Endothelial cell of umbilical vein (primary cell): ENCODE measurements at regions of chr1 and their contacts with region 1.

Region 1: DNA sequence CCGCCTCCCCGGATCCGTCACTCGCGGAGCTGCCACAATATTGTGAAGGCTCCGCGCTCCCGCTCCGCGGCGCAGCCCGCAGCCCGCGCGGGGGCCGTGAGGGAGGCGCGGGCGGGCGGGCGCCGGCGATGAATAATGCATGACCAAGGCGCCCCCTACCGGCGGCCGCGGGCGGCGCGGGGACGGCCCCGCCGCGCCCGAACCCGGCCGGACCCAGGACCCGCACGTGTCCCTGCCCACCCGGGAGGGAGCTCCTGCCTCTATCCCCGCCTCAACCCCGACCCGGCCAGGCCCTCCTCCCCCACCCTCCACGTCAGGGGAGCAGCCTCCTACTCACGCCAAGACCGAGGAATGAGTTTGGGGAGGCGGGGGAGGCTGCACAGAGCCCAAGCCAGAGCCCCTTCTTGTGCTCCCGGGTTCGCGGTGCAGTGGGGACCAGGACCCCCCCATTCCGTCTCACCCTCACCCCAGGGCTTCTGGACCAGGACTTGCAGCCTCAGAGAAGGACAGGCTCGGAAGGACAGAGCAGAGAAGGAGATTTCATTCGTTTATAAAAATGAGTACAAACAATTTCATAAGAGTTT is 70.8 kb upstream of the CASZ1 start:
- DNase-seq: peak; percentile 22
- H3K4me3 ChIP-seq: peak overlapping the region in 1 of 3 experiments; percentile 22
- H3K27ac ChIP-seq: no peak overlapping the region
- H3K4me1 ChIP-seq: no peaks in the 10 kb centered on the region
- H3K27me3 ChIP-seq: peaks cover 9 to 11% of the 10 kb centered on the region in 2 experiments
- CTCF ChIP-seq: peak; percentile 48 to 77
- POLR2A ChIP-seq: no peak

Region 2: GRCh38 chr1:9996624-9997582 is 870.3 kb before region 1 on chr1 and contains the start of gene RBP7:
- CTCF ChIA-PET with region 1: no interaction called
- POLR2A ChIA-PET with region 1: no interaction called
- dilution Hi-C with region 1: no loop called
- intact Hi-C with region 1: no loop called
- DNase-seq: no peak
- H3K4me3 ChIP-seq: no peak within 1 kb of the TSS
- H3K27ac ChIP-seq: no peak within 1 kb of the TSS
- H3K4me1 ChIP-seq: peaks cover 9% of the 10 kb centered on the region
- H3K27me3 ChIP-seq: peaks cover 24 to 51% of the 10 kb centered on the region in 2 experiments
- CTCF ChIP-seq: no peak
- POLR2A ChIP-seq: no peak
- total RNA-seq, gene RBP7: not detected in 2 replicates

Region 3: DNA sequence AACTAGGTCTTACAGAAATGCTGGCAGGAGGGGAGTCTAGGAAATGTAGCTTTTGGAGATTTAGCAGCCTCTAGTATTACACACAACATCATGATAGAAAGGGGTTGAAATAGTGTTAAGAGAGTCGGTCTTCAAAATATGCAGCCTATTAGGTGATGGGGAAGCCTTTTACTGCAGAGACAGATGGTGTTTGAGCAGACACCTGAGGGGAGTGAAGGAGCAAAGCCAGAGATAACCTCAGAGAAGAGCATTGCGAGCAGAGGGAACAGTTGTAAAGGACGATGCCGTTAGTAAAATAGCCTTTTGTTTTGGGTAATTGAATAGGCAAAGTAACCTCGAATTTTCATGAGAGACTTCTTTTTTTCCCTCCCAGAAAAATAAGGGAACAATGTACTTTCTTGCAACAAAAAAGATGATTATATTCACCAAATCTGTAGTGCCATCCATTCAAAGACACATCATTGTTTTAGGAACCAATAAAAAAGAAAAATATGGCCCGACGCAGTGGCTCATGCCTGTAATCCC is 723.2 kb before region 1 on chr1:
- CTCF ChIA-PET with region 1: no interaction called
- POLR2A ChIA-PET with region 1: no interaction called
- dilution Hi-C with region 1: no loop called
- intact Hi-C with region 1: no loop called
- DNase-seq: no peak
- H3K4me3 ChIP-seq: no peak overlapping the region
- H3K27ac ChIP-seq: no peak overlapping the region
- H3K4me1 ChIP-seq: no peaks in the 10 kb centered on the region
- H3K27me3 ChIP-seq: no peaks in the 10 kb centered on the region
- CTCF ChIP-seq: no peak
- POLR2A ChIP-seq: no peak

Region 4: DNA sequence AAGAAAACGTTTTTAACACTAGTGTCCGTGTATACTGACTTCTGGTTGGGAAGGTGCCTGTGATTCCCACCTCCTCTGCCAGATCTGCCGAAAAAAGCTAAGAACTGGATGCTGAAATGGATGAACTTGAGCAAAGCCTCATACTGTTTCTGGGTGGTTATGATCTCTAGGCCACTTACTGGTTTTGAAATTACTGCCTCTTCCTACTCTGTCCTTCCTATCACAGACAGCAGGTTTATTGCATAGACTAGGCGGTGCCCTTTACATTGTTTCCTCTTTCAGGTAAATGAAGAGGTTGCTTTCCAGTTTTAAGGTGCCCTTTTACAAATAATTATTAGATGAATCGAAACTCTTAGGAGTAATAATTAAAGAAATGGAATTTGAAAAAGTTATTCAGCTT is 365.0 kb before region 1 on chr1:
- CTCF ChIA-PET with region 1: interaction called, 132 read pairs
- POLR2A ChIA-PET with region 1: no interaction called
- dilution Hi-C with region 1: no loop called
- intact Hi-C with region 1: loop called (anchors 1 kb)
- DNase-seq: no peak
- H3K4me3 ChIP-seq: no peak overlapping the region
- H3K27ac ChIP-seq: no peak overlapping the region
- H3K4me1 ChIP-seq: no peaks in the 10 kb centered on the region
- H3K27me3 ChIP-seq: no peaks in the 10 kb centered on the region
- CTCF ChIP-seq: no peak
- POLR2A ChIP-seq: no peak

Region 5: GRCh38 chr1:10528066-10529014 is 338.9 kb before region 1 on chr1:
- CTCF ChIA-PET with region 1: interaction called, 12 read pairs
- POLR2A ChIA-PET with region 1: no interaction called
- dilution Hi-C with region 1: no loop called
- intact Hi-C with region 1: loop called (anchors 1 kb)
- DNase-seq: peak; percentile 75
- H3K4me3 ChIP-seq: peak overlapping the region in 1 of 3 experiments; percentile 28
- H3K27ac ChIP-seq: peak overlapping the region; percentile 87
- H3K4me1 ChIP-seq: peaks cover 30% of the 10 kb centered on the region
- H3K27me3 ChIP-seq: no peaks in the 10 kb centered on the region
- CTCF ChIP-seq: no peak
- POLR2A ChIP-seq: no peak

Region 6: DNA sequence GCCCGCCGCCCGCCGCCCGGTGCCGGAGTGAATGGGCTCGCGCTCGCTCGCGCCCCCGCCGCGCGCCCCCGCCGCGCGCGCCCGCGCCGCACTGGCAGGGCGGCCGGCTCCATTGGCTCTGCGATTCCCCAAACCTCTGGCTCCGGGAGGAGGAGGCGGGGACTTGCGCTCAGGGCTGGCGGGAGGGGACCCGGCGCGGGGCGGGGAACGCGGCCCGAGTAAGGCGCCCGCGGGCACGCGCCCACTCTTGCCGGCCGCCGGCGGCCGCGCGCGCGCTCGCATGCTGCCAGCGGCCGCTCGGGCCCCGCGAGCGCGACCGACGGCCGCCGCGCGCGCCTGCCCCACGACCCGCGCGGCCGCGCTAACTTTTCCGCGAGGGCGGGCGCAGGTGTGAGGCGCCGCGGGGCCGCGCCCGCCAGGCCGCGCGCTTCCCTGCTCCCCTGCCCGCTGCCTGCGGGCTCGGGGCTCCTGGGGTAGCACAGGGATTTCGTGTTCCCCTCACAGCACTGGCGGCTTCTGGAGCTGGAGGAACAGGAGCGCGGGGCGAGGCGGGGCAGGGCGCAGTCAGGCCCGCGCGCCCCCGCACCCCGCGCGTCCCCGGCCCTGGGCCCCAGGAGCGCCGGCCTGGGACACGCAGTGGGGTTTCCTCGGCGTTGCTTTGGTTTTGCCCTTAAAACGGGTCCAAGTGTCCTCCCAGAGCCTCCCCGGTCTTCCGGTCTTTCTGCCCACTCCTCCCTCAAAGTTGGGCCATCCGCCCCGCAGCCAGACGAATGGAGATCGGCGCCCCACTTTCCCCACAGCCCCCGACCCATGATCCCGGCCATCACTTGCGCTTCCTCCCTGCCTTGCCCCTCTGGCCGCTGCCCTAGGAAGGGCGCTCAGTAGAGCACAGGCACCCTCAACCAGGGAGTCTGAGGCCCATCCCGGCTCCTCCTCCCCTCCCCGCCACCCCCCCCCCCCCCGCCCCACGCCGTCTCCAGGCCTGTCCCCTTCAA is 172.3 kb before region 1 on chr1:
- CTCF ChIA-PET with region 1: no interaction called
- POLR2A ChIA-PET with region 1: no interaction called
- dilution Hi-C with region 1: no loop called
- intact Hi-C with region 1: loop called (anchors 1 kb)
- DNase-seq: peak; percentile 77
- H3K4me3 ChIP-seq: peak overlapping the region; percentile 28 to 51 (median 31)
- H3K27ac ChIP-seq: no peak overlapping the region
- H3K4me1 ChIP-seq: no peaks in the 10 kb centered on the region
- H3K27me3 ChIP-seq: peaks cover 2 to 3% of the 10 kb centered on the region in 2 experiments
- CTCF ChIP-seq: no peak
- POLR2A ChIP-seq: no peak